HCT116 (cell line): ENCODE measurements at regions of chr18 and their contacts with region 1.

Region 1: GRCh38 chr18:7479756-7480155 is 87.4 kb upstream of the PTPRM start:
- DNase-seq: no peak
- ATAC-seq: no peak
- H3K4me3 ChIP-seq: no peak overlapping the region
- H3K27ac ChIP-seq: no peak overlapping the region
- H3K4me1 ChIP-seq: no peaks in the 10 kb centered on the region
- H3K27me3 ChIP-seq: no peaks in the 10 kb centered on the region
- CTCF ChIP-seq: no peak
- POLR2A ChIP-seq: no peak
- RAD21 ChIP-seq: no peak

Region 2: DNA sequence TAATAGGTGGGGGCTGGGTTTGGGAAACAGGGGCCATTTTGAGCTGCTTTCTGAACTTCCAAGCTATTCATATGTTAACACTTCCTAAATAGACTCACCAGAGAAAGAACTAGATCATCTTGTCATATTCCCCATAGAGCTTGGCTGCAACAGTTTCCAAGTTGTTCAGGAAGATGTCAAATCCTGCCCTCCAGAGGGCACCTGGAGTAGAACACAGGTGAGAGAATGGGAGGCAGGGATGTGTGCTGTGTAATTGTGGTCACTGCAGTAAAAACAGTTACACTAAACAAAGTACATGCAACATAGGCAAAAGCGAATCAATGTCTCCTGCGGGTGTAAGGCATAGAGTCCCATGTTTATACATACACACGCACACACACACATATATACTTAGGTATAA is 283.3 kb before region 1 on chr18:
- CTCF ChIA-PET with region 1: no interaction called
- POLR2A ChIA-PET with region 1: no interaction called
- RAD21 ChIA-PET with region 1: no interaction called
- intact Hi-C with region 1: no loop called
- DNase-seq: no peak
- ATAC-seq: no peak
- H3K4me3 ChIP-seq: no peak overlapping the region
- H3K27ac ChIP-seq: no peak overlapping the region
- H3K4me1 ChIP-seq: no peaks in the 10 kb centered on the region
- H3K27me3 ChIP-seq: no peaks in the 10 kb centered on the region
- CTCF ChIP-seq: no peak
- POLR2A ChIP-seq: no peak
- RAD21 ChIP-seq: no peak

Region 3: DNA sequence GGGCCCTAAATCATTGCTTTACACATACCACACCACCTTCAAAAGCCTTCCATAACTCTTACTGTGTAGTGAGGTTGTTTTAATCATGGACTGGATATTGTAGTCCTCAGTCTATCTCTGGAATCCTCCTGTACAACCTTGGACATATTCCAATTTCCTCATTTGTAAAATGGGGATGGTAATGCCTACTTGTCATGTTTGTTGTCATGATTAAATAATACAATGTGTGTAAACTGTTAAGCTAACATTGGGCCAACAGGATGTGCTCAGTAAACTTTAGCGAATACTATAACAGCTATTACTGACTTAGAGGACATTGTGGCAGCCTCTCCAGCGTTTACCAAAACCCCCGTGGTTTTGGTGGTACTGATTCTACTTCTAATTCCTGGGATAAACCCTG is 12.6 kb after region 1 on chr18:
- CTCF ChIA-PET with region 1: no interaction called
- POLR2A ChIA-PET with region 1: no interaction called
- RAD21 ChIA-PET with region 1: no interaction called
- intact Hi-C with region 1: no loop called
- DNase-seq: no peak
- ATAC-seq: no peak
- H3K4me3 ChIP-seq: no peak overlapping the region
- H3K27ac ChIP-seq: no peak overlapping the region
- H3K4me1 ChIP-seq: no peaks in the 10 kb centered on the region
- H3K27me3 ChIP-seq: no peaks in the 10 kb centered on the region
- CTCF ChIP-seq: no peak
- POLR2A ChIP-seq: no peak
- RAD21 ChIP-seq: no peak

Region 4: GRCh38 chr18:7545734-7546133 is 66.0 kb after region 1 on chr18:
- CTCF ChIA-PET with region 1: no interaction called
- POLR2A ChIA-PET with region 1: no interaction called
- RAD21 ChIA-PET with region 1: no interaction called
- intact Hi-C with region 1: loop called (anchors 10 kb)
- DNase-seq: no peak
- ATAC-seq: no peak
- H3K4me3 ChIP-seq: no peak overlapping the region
- H3K27ac ChIP-seq: no peak overlapping the region
- H3K4me1 ChIP-seq: no peaks in the 10 kb centered on the region
- H3K27me3 ChIP-seq: no peaks in the 10 kb centered on the region
- CTCF ChIP-seq: no peak
- POLR2A ChIP-seq: no peak
- RAD21 ChIP-seq: no peak

Region 5: GRCh38 chr18:8121942-8122480 is 642.3 kb after region 1 on chr18:
- CTCF ChIA-PET with region 1: no interaction called
- POLR2A ChIA-PET with region 1: no interaction called
- RAD21 ChIA-PET with region 1: no interaction called
- intact Hi-C with region 1: no loop called
- DNase-seq: peak; percentile 33
- ATAC-seq: peak; percentile 59; the same call in 1 of the 2 replicates
- H3K4me3 ChIP-seq: no peak overlapping the region
- H3K27ac ChIP-seq: no peak overlapping the region
- H3K4me1 ChIP-seq: peaks cover 2 to 34% of the 10 kb centered on the region in 2 experiments; a peak in 3 of 4 replicates
- H3K27me3 ChIP-seq: no peaks in the 10 kb centered on the region
- CTCF ChIP-seq: no peak
- POLR2A ChIP-seq: no peak
- RAD21 ChIP-seq: no peak